KBM-7 (cell line): ENCODE measurements at regions of chr1 and their contacts with region 1.

Region 1: DNA sequence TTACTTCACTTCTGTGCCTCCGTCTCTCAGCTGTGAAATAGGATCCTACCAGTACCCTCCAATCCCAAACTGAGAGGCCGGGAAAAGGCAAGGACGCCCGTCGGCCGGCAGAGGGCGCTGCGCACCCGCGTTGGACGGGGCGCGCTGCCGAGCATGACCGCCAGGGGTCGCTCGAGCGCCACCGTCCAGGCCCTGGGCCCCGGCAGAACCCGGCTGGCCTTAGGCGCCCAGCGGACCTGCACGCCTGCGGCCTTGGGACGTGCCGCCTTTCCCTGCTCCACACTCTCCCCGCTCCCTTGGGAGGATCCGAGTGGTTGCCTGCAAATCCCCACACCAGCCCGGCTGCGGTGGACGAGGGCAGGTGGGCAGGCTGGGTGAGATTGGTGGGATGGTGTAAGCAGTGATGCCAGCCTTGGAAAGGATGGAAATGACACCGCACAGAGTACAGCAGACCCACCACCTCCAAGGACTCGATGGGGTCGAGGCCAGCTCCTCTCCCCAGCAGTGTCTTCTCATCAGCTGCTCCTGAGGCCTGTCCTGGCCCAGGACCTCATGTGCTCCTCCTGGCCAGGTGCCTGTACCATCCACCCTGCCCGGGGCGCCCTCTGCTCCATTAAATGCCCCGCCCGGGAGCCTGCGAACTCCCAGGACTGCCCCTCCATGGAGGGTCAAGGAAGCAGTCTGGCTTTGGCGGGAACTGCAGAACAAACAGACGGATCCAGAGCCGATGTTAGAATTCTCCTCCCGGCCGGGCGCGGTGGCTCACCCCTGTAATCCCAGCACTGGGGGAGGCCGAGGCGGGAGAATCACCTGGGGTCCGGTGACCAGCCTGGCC is 47.4 kb upstream of the LBR start:
- DNase-seq: peak; percentile 81

Region 2: DNA sequence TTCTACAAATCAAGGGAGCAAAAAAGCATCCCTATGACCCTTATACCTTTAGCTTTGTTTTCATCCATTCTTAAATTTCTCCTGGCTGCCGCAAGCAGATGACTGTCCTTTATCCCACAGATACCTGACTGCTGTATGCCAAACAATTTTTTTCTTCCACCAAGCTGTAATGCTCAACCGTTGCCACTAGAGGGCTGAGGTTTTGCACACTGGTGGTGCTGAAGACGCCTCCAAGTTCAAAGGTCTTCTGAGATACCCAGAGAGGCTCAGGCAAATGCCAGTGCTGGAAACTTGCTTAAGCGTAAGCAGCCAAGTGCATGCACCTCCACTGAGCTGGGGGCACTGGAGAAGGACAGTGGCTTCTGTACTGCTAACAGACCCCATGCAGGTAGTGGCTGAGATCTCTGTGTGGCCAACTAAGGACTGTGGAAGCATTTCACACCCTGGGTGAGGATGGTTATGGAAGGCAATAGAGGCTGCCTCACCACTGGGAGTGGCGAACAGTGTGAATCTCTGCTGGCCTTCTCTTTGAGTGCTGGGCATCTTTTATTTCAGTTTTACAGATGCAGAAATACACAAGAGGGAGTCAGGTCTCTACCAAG is 830.5 kb before region 1 on chr1:
- in situ Hi-C with region 1: no loop called
- DNase-seq: peak; percentile 52

Region 3: GRCh38 chr1:225977937-225978748 is 502.9 kb after region 1 on chr1:
- in situ Hi-C with region 1: loop called (anchors 10 kb)
- DNase-seq: no peak